Activated CD4-positive, alpha-beta T cell treated with anti-CD3 and anti-CD28 coated beads, Interleukin-2, amount 10 ng/mL, durations not matched to agents 24 days and 14 days (primary cell): ENCODE measurements at regions of chr19 and their contacts with region 1.

Region 1: DNA sequence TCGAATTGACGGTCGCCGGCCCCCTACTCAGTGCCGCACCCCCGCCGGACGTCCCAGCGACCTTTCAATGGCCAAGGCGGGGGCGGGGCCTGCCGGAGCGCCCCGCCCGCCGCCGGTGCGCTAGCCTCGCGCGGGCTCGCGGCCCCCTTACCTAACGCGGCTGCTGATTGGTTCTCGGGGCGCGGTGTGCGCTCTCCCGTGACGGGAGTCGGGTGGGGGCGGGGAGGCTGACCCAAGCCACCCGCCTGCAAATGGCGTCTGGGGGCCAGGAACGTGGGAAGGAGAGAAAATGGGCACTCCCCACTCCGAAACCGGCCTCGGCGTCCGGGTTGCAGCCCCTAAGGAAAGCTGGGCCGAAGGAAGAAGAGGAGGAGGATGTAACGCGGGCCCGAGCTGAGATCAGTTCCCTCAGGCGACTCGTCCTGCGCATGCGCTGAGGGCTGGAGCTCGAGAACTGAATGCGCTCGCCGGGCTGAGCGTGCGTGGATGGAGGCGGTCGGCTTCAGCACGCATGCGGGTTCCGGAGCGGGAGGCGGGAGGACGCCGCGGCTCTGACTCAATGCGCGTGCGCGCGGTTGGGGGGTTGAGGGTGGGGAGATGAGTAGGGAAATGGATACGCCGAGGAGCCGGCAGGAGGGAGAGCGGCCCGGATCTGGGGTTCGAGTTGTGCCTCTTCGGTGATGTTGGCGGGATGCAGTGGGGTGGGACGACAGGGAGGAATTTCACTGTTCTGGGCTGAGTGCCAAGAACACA is at the start of gene SMG9:
- DNase-seq: peak; percentile 100
- H3K4me3 Mint-ChIP-seq: peak within 1 kb of the TSS; percentile 94
- H3K27ac Mint-ChIP-seq: peak within 1 kb of the TSS; percentile 100
- H3K4me1 Mint-ChIP-seq: peaks cover 68% of the 10 kb centered on the region
- H3K27me3 Mint-ChIP-seq: no peaks in the 10 kb centered on the region
- total RNA-seq, gene SMG9: 83.9 and 86.6 TPM in 2 replicates

Region 2: DNA sequence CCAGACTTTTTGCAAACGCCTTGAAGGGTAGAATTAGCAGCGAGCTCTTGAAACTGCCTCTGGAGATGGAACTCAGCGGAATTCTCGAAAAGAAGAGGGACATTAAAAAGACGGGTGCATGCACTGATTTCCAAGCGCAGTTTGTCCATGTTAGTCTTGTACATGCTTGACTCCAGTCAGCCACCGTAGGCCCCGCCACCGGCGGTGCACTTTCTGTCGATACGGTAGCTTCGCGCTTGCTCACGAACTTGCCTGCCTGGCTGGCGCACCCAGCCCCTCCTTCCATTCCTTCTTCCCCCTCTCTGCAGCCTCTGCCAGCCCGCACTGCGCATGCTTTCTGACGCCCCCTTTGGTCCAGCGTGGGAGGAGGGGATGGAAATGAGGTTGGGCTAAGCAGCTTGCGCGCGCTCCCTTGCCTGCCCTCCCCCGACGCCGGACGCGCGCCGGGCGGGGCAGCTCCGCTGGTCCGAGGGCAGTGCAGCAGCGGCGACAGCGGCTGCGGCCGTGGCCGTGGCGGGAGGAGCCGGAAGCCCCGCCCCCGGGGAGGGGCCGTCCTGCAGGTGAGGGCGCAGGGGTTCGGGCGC is 221.6 kb before region 1 on chr19 and contains the start of gene ZNF575:
- intact Hi-C with region 1: loop called (anchors 2 kb)
- DNase-seq: peak; percentile 95
- H3K4me3 Mint-ChIP-seq: peak within 1 kb of the TSS; percentile 83
- H3K27ac Mint-ChIP-seq: peak within 1 kb of the TSS; percentile 95
- H3K4me1 Mint-ChIP-seq: peaks cover 20% of the 10 kb centered on the region
- H3K27me3 Mint-ChIP-seq: no peaks in the 10 kb centered on the region
- total RNA-seq, gene ZNF575: 1.8 and 2.4 TPM in 2 replicates

Region 3: GRCh38 chr19:43619262-43620060 is 135.2 kb before region 1 on chr19 and contains the start of gene ZNF428:
- intact Hi-C with region 1: loop called (anchors 1 kb)
- DNase-seq: peak; percentile 96
- H3K4me3 Mint-ChIP-seq: peak within 1 kb of the TSS; percentile 98
- H3K27ac Mint-ChIP-seq: peak within 1 kb of the TSS; percentile 99
- H3K4me1 Mint-ChIP-seq: peaks cover 23% of the 10 kb centered on the region
- H3K27me3 Mint-ChIP-seq: no peaks in the 10 kb centered on the region
- total RNA-seq, gene ZNF428: 18.1 and 19.4 TPM in 2 replicates

Region 4: DNA sequence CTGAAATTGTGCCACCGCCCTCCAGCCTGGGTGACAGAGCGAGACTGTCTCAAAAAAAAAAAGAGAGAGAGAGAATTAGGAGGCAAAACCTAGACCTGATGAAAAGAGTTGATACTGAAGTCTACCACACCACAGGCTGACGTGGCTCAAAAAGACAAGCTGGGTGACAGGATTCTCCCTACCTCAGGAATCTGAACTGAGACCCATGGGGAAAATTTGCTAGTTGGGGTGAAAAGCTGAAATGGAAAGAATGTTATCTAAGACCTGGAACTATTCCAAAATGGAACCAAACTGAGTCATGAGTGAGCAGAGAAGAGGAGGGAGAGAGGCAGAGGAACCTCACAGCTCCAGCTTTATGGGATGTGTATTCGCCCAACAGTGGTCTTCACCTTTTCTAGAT is 11.7 kb before region 1 on chr19:
- intact Hi-C with region 1: loop called (anchors 1 kb)
- DNase-seq: no peak
- H3K4me3 Mint-ChIP-seq: no peak overlapping the region
- H3K27ac Mint-ChIP-seq: no peak overlapping the region
- H3K4me1 Mint-ChIP-seq: peaks cover 15% of the 10 kb centered on the region
- H3K27me3 Mint-ChIP-seq: no peaks in the 10 kb centered on the region

Region 5: DNA sequence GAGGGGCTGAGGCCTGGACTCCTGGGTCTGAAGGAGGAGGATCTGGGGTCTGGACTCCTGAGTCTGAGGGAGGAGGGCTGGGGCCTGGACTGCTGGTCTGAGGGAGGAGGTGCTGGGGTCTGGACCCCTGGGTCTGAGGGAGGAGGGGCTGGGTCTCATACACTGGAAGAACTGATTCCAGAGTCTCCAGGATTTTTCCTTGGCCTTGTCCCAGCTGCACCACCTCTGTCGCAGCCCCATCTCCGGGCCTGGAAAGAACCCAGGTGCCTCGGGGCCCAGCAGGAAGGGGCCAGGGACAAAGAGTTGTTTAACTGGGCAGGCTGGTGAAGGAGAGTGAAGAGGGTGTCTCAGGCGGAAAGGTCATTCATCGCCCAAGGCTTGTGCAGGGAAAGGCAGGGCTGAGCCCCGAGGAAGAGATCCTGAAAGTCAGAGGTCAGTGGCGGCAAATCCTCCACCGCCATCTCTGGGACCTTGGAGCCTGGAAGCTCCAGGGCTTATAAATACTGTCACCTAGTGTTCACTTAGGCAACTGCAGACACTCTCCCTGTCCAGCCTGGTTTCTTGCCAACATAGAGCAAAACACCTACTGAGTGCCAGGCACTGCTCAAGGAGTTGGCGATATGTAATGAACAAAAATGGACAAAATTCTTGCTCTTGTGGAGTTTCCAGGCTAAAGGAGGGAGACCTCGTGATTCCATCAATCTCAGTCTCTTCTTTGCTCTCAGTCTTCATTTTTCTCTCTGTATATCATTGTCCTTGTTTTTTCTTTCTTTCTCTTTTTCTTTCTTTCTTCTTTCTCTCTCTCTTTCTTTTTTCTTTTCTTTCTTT is 30.5 kb after region 1 on chr19:
- intact Hi-C with region 1: loop called (anchors 1 kb)
- DNase-seq: peak; percentile 89
- H3K4me3 Mint-ChIP-seq: peak overlapping the region; percentile 75
- H3K27ac Mint-ChIP-seq: peak overlapping the region; percentile 92
- H3K4me1 Mint-ChIP-seq: peaks cover 39% of the 10 kb centered on the region
- H3K27me3 Mint-ChIP-seq: peaks cover 4% of the 10 kb centered on the region